ENCODE measurements at regions of chr11 and their contacts with region 1.

Region 1: GRCh38 chr11:3412837-3413236 is 33.9 kb upstream of the ZNF195 start:
- DNase-seq: no peak
- H3K4me3 ChIP-seq: no peak overlapping the region
- H3K27ac ChIP-seq: no peak overlapping the region
- H3K4me1 ChIP-seq: no peaks in the 10 kb centered on the region
- H3K27me3 ChIP-seq: no peaks in the 10 kb centered on the region
- CTCF ChIP-seq: no peak

Region 2: DNA sequence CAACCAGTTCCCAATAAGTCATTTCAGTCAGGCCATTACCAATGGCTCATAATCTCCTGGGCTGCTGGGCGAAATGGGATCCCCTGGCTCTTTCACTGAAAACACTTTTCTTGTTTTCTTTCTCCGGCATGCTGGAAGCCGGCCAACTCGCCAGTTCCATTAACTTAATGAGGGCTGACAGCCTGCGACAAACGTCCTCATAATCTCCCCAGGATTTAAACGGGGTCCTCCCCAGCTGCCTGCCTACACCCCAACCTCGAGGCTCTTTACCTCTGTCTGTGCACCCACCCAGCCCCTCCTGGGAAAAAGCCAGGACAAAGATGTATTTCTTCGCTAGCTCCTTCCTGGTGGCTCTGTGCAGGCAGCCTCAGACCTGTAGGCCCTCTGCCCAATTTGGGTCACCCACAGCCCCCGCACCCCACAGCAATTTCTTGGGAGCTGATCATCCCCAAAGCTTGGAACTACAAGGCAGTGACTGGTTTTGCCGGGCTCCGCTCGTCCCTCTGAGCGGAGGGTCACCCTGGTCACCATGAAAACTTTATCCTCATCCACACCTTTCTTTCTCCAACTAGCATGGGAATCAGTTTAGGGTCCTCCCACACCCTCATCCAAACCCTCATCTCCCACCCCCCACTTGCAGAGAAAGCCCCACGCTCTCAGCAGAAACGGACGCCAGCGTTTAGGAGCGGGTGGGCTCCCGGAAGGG is 662.0 kb before region 1 on chr11:
- CTCF ChIA-PET with region 1: no interaction called
- POLR2A ChIA-PET with region 1: no interaction called
- intact Hi-C with region 1: no loop called
- DNase-seq: no peak
- H3K4me3 ChIP-seq: no peak overlapping the region
- H3K27ac ChIP-seq: no peak overlapping the region
- H3K4me1 ChIP-seq: no peaks in the 10 kb centered on the region
- H3K27me3 ChIP-seq: no peaks in the 10 kb centered on the region
- CTCF ChIP-seq: no peak

Region 3: GRCh38 chr11:3153291-3153861 is 259.5 kb before region 1 on chr11:
- CTCF ChIA-PET with region 1: interaction called, 15 read pairs
- POLR2A ChIA-PET with region 1: no interaction called
- intact Hi-C with region 1: no loop called
- DNase-seq: no peak
- H3K4me3 ChIP-seq: no peak overlapping the region
- H3K27ac ChIP-seq: no peak overlapping the region
- H3K4me1 ChIP-seq: no peaks in the 10 kb centered on the region
- H3K27me3 ChIP-seq: no peaks in the 10 kb centered on the region
- CTCF ChIP-seq: no peak

Region 4: DNA sequence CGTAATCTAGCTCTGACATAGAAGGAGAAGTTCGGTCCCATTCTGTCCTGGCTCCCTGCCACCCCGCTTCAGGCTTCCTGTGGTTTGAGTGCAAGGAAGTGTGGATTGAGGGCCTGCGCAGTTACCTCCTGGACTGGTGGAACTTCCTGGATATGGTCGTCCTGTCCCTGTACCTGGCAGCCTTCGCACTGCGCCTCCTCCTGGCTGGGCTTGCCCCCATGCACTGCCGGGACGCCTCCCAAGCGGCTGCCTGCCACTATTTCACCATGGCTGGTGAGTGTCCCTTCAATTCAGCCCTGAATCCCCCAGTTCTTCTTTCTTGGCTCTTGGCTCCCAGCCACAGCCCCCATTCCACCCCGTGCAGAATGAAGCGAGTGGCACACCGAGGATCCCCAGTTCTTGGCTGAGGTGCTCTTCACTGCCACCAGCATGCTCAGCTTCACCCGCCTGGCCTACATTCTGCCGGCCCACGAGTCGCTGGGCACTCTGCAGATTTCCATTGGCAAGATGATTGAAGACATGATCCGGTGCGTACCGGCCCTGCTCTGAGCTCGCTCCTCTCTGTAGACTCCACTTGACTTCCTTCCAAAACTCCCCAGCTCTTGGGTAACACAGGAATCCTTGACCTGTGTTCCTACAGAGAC is 213.6 kb after region 1 on chr11:
- CTCF ChIA-PET with region 1: no interaction called
- POLR2A ChIA-PET with region 1: no interaction called
- intact Hi-C with region 1: no loop called
- DNase-seq: no peak
- H3K4me3 ChIP-seq: no peak overlapping the region
- H3K27ac ChIP-seq: no peak overlapping the region
- H3K4me1 ChIP-seq: no peaks in the 10 kb centered on the region
- H3K27me3 ChIP-seq: no peaks in the 10 kb centered on the region
- CTCF ChIP-seq: no peak

Region 5: DNA sequence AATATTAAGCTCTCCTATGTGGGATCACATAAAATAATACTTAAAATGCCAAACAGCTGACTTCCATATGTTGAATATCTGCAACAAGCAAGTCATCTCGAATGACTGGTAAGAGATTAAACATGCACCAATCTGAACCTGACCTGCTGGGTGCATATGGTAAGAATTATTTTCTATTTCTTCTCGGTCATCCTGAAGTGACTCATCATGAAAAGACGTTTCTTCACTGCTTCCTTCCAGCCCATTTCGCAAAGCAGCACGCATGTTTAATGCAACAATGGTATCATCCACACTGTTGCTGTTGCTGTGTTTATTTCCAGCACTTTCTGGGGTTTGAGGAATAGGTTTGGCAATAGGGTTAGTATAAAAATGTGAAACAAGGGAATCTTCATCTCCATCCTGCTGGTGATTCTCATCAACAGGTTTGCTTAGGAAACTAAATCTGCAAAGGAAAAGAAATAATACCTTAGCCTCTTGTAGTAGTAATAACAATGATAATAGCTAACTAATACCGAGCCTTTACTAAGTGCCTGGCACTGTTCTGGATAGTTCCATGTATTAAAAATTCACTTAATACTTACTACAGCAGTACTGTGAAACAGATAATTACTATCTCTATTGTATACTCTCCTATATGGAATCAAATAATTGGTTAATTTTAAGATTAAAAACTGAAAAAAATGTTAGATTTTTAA is 310.3 kb after region 1 on chr11:
- CTCF ChIA-PET with region 1: no interaction called
- POLR2A ChIA-PET with region 1: no interaction called
- intact Hi-C with region 1: no loop called
- DNase-seq: peak in 1 of 2 experiments; percentile 40
- H3K4me3 ChIP-seq: no peak overlapping the region
- H3K27ac ChIP-seq: no peak overlapping the region
- H3K4me1 ChIP-seq: no peaks in the 10 kb centered on the region
- H3K27me3 ChIP-seq: no peaks in the 10 kb centered on the region
- CTCF ChIP-seq: no peak